PC-3 (cell line): ENCODE measurements at regions of chr19 and their contacts with region 1.

Region 1: DNA sequence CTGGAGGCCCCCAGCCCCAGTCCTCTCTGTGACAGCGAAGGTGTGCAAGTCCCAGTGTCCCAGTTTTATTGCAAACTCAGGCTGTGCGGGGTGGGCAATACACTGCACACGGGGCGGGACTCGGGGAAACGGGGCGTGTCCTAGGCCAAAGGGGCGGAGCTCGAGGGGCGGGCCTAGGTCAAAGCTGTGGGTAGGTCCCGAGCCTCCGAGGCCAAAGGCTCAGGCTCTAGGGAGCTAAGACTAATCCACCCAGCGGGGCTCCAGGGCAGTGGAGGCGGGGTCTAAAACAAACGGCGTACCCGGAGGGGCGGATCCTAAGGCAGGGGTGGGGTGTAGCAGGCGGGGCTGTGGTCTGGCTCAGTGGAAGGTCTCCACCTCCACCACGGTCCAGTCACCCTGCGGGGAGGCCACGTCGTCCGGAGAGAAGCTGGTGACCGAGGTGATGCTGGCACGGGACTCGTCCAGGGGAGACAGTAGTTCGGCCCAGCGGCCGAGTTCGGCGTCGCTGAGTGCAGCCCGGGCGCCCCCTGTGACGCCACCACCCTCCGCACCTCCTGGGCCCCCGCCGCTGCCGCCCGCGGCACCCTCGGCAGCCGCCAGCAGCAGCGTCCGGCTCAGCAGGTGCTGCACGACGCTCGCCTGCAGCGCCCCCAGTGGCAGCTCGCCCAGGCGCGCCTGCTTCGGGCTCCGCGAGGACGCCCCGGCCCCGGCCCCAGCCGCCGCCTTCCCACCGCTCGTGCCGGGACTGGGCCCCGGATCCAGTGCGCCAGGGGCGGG is 5.3 kb downstream of the PRR36 start:
- DNase-seq: peak; percentile 95
- ATAC-seq: peak; percentile 52
- H3K4me3 ChIP-seq: peak overlapping the region; percentile 72
- H3K27ac ChIP-seq: peak overlapping the region; percentile 12; the same call in 1 of the 2 replicates
- H3K4me1 ChIP-seq: peaks cover 24% of the 10 kb centered on the region
- H3K27me3 ChIP-seq: no peaks in the 10 kb centered on the region
- CTCF ChIP-seq: peak; percentile 82

Region 2: DNA sequence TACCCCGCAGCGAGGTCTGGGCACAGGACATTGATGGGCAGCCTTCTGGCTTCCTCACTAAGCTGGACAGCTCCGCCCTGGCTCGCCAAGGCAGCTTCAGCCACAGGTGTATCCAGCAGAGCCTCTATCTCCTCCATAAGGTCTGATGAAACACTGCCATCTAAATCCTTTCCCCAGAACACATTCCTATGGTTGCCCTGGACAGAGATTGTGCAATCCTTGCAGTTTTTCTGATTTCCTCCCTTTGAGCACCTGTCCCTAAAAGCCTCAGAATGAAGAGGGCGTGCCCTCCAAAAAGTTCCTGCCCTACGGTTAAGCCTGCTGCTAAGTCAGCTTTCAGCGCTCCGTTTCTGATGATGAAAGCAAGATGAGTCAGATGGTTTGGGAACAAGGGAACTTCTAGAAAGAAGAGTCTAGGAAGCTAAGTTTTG is 84.9 kb before region 1 on chr19:
- CTCF ChIA-PET with region 1: no interaction called
- POLR2A ChIA-PET with region 1: no interaction called
- intact Hi-C with region 1: no loop called
- DNase-seq: peak; percentile 97
- ATAC-seq: peak; percentile 73
- H3K4me3 ChIP-seq: no peak overlapping the region
- H3K27ac ChIP-seq: no peak overlapping the region
- H3K4me1 ChIP-seq: peaks cover 10% of the 10 kb centered on the region
- H3K27me3 ChIP-seq: peaks cover 22% of the 10 kb centered on the region; the same call in 1 of the 2 replicates
- CTCF ChIP-seq: no peak

Region 3: DNA sequence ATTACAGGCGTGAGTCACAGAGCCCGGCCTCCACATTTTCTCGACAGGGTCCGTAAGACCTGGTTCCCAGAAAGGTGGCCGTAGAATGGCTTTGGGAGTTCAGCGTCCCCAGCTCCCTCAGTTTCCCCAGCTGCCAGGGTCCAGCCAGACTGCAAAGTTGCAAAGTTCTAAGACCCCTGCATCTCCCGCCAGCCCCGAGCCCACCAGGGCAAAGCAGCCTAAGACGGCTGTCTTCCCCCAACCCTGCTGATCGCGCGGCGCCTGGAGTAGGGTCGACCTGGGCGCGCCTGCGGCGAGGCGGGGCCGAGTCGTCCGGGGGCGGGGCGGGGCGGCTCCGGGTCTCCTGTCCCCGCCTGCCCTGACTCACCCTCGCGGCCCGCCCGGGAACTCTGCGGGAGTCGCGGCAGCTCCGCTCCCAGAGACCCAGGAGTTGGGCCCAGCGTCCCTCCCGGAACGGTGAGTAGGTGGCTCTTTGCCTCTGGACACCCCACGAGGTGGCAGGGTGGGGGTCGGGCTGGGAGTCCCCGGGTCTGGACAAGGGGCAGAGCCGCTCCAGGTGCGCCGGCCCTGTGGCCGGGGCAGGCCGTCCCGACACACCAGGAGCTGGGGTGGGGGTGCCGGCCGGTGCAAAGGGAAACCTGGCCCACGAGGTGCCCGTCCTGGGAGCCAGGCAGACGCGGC is 19.4 kb after region 1 on chr19 and contains the start of gene LRRC8E:
- CTCF ChIA-PET with region 1: interaction called, 13 read pairs
- POLR2A ChIA-PET with region 1: interaction called, 3 read pairs
- intact Hi-C with region 1: no loop called
- DNase-seq: peak; percentile 87
- ATAC-seq: peak; percentile 95
- H3K4me3 ChIP-seq: peak within 1 kb of the TSS; percentile 90
- H3K27ac ChIP-seq: peak within 1 kb of the TSS; percentile 7; the same call in 1 of the 2 replicates
- H3K4me1 ChIP-seq: peaks cover 14% of the 10 kb centered on the region
- H3K27me3 ChIP-seq: no peaks in the 10 kb centered on the region
- CTCF ChIP-seq: no peak
- total RNA-seq, gene LRRC8E: 30.8 and 35.3 TPM in 2 replicates